PC-3 (cell line): ENCODE measurements at regions of chr12 and their contacts with region 1.

Region 1: DNA sequence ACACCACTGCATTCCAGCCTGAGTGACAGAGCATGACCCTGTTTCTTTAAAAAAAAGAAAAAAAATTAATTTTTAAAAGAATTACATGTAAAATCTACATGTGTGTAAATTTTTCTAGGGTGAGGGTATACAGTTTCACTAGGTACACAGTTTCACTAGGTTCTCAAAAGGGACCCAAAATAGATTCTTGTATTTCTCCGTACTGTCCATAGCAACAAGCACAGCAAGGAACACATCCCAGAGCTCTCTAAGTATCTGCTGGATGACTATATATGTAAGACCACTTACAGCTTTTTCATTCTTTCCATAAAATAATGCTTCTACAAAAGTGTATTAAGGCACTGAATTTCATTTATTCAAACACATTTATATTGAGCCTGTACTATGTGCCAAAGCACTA is 55.1 kb downstream of the ATXN2 start:
- DNase-seq: no peak
- ATAC-seq: no peak
- H3K4me3 ChIP-seq: no peak overlapping the region
- H3K27ac ChIP-seq: no peak overlapping the region
- H3K4me1 ChIP-seq: no peaks in the 10 kb centered on the region
- H3K27me3 ChIP-seq: no peaks in the 10 kb centered on the region
- CTCF ChIP-seq: no peak

Region 2: DNA sequence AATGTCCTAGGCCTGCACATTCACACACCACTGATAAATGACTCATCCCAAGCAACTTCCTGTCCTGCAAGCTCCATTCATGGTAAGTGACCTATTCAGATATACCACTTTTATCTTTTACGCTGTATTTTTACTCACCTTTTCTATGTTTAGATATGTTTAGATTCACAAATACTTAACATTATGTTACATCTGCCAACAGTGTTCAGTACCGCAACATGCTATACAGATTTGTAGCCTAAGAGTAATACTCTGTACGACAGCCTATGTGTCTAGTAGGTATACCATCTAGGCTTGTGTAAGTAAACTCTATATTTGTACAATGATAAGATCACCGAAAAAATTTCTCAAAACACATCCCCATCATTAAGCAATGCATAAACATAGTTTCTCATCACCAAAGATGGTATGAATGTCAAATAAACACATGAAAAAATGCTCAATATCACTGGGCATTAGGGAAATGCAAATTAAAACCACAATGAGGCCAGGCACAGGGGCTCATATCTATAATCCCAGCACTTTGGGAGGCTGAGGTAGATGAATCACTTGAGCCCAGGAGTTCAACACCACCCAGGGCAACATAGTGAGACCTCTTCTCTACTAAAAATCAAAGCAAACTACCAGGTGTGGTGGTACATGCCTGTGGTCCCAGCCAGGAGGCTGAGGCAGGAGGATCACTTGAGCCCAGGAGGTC is 34.4 kb after region 1 on chr12:
- CTCF ChIA-PET with region 1: no interaction called
- POLR2A ChIA-PET with region 1: no interaction called
- intact Hi-C with region 1: loop called (anchors 2 kb)
- DNase-seq: peak; percentile 84
- ATAC-seq: peak; percentile 99
- H3K4me3 ChIP-seq: peak overlapping the region; percentile 3; the same call in 1 of the 2 replicates
- H3K27ac ChIP-seq: peak overlapping the region; percentile 64
- H3K4me1 ChIP-seq: peaks cover 24% of the 10 kb centered on the region
- H3K27me3 ChIP-seq: no peaks in the 10 kb centered on the region
- CTCF ChIP-seq: no peak